Activated naive CD4-positive, alpha-beta T cell treated with anti-CD3 and anti-CD28 coated beads for 36 hours (primary cell): ENCODE measurements at regions of chr13 and their contacts with region 1.

Region 1: GRCh38 chr13:45055198-45055901 is 65.0 kb upstream of the GTF2F2 start:
- DNase-seq: peak; percentile 86
- H3K4me3 Mint-ChIP-seq: no peak overlapping the region
- H3K27ac Mint-ChIP-seq: no peak overlapping the region
- H3K4me1 Mint-ChIP-seq: peaks cover 30% of the 10 kb centered on the region
- H3K27me3 Mint-ChIP-seq: peaks cover 23% of the 10 kb centered on the region

Region 2: DNA sequence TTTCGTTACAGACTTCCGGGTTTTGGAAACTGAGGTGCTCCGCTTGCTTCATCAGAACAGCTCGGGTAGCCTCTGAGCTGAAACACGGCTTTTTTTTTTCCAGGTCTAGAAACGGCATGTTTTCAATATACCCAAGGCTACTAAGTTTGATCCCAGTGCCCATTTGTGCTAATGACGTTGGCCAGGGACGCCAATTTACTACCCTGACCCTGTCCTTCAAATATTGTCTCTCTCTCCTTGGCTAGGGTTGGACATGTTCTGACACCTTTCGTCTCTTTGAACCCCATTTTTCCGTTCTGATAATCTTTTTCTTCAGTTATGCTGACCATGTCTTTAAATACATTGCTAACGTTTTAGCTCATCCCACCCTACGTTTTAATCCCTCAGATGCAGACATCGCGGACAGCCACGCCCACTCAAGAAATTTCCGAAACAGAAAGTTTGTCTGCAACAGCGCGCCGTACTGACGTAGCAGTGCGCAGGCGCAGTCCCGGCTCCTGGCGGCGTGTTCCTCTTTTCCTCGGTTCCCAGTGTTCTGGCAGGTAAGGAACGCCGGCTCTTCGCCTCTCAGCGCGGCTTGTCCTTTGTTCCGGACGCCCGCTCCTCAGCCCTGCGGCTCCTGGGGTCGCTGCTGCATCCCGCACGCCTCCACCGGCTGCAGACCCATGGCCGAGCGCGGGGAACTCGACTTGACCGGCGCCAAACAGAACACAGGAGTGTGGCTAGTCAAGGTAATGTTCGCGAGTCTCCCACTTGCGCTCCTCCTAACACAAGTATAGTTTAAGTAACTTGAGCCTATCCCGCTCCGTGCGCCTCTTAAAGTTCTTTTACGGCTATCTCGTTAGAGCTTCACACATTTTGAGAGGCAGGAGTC is 64.9 kb after region 1 on chr13 and contains the start of gene GTF2F2:
- CTCF ChIA-PET with region 1: no interaction called
- intact Hi-C with region 1: loop called (anchors 1 kb)
- DNase-seq: peak; percentile 88
- H3K4me3 Mint-ChIP-seq: no peak within 1 kb of the TSS
- H3K27ac Mint-ChIP-seq: no peak within 1 kb of the TSS
- H3K4me1 Mint-ChIP-seq: peaks cover 9% of the 10 kb centered on the region
- H3K27me3 Mint-ChIP-seq: no peaks in the 10 kb centered on the region
- total RNA-seq, gene GTF2F2: 21.3 to 22.4 TPM

Region 3: DNA sequence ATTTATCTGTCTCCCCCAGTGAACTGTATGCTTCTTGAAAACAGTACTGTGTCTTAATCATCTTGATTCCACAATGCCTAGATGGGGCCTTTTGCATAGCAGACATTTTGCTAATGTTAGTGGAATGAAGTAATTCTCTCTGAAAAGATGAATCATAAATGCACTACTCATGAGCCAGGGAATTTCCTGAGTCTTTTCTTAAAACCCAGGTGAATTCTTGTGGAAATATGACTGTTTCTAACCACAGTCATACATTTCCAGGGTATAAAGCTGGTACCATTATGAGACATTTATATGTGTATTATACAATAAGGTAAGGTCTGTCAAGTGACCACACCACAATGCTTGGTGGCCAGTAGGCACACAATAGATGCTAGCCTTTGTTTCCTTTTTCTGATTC is 151.0 kb after region 1 on chr13:
- CTCF ChIA-PET with region 1: no interaction called
- intact Hi-C with region 1: loop called (anchors 1 kb)
- DNase-seq: peak; percentile 33
- H3K4me3 Mint-ChIP-seq: no peak overlapping the region
- H3K27ac Mint-ChIP-seq: peak overlapping the region; percentile 37
- H3K4me1 Mint-ChIP-seq: peaks cover 31% of the 10 kb centered on the region
- H3K27me3 Mint-ChIP-seq: no peaks in the 10 kb centered on the region

Region 4: GRCh38 chr13:45297456-45298205 is 242.3 kb after region 1 on chr13:
- CTCF ChIA-PET with region 1: interaction called, 132 read pairs
- intact Hi-C with region 1: loop called (anchors 1 kb)
- DNase-seq: peak; percentile 49
- H3K4me3 Mint-ChIP-seq: no peak overlapping the region
- H3K27ac Mint-ChIP-seq: peak overlapping the region; percentile 84
- H3K4me1 Mint-ChIP-seq: peaks cover 39% of the 10 kb centered on the region
- H3K27me3 Mint-ChIP-seq: peaks cover 2% of the 10 kb centered on the region

Region 5: DNA sequence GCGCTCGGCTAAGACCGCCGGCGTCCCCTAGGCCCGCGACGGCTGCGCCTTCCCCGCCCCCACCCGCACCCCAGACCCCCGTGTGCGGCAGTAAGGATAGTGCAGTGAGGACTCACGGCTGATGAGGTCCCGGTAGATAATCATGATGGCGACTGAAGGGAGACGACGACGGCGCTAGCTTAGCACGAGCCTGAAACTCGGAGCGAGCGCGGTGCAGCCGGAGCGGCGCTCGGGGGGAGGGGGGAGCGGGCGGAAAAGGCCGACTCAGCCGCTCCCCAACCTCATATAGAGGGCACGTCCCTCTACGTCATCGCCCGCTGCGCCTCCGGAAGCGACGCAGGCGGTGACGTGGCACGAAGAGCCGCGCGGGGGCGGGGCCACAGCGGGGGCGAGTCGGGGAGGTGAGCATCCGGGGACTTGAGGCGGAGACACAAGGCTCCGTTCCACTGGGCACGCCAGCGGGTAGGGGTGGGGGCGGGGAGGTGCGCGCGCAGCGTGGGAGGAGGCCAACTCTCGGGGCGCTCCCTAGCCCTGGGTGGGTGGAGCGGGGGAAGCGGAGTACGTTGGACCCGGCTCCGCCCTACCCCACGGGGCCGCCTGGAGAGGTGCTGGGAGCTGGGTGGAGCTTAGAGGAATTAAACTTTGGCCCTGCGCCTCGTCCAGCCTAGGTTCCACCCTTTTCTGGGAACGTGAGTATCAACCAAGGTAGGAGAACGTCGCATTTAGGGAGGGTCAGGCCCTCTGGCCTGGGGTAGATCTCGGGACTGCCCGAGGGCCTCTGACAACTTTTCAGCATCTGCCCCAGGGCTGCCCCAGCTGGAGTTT is 285.8 kb after region 1 on chr13 and contains the start of gene TPT1:
- CTCF ChIA-PET with region 1: no interaction called
- intact Hi-C with region 1: loop called (anchors 2 kb)
- DNase-seq: peak; percentile 100
- H3K4me3 Mint-ChIP-seq: peak within 1 kb of the TSS; percentile 91
- H3K27ac Mint-ChIP-seq: peak within 1 kb of the TSS; percentile 99
- H3K4me1 Mint-ChIP-seq: peaks cover 43% of the 10 kb centered on the region
- H3K27me3 Mint-ChIP-seq: no peaks in the 10 kb centered on the region
- total RNA-seq, gene TPT1: 3,331 to 3,631 TPM

Region 6: GRCh38 chr13:45393941-45394570 is 338.7 kb after region 1 on chr13:
- CTCF ChIA-PET with region 1: no interaction called
- intact Hi-C with region 1: loop called (anchors 2 kb)
- DNase-seq: peak; percentile 61
- H3K4me3 Mint-ChIP-seq: no peak overlapping the region
- H3K27ac Mint-ChIP-seq: no peak overlapping the region
- H3K4me1 Mint-ChIP-seq: peaks cover 47% of the 10 kb centered on the region
- H3K27me3 Mint-ChIP-seq: no peaks in the 10 kb centered on the region